Testis (tissue), 5 donors: ENCODE measurements at regions of chr12 and their contacts with region 1.

Region 1: DNA sequence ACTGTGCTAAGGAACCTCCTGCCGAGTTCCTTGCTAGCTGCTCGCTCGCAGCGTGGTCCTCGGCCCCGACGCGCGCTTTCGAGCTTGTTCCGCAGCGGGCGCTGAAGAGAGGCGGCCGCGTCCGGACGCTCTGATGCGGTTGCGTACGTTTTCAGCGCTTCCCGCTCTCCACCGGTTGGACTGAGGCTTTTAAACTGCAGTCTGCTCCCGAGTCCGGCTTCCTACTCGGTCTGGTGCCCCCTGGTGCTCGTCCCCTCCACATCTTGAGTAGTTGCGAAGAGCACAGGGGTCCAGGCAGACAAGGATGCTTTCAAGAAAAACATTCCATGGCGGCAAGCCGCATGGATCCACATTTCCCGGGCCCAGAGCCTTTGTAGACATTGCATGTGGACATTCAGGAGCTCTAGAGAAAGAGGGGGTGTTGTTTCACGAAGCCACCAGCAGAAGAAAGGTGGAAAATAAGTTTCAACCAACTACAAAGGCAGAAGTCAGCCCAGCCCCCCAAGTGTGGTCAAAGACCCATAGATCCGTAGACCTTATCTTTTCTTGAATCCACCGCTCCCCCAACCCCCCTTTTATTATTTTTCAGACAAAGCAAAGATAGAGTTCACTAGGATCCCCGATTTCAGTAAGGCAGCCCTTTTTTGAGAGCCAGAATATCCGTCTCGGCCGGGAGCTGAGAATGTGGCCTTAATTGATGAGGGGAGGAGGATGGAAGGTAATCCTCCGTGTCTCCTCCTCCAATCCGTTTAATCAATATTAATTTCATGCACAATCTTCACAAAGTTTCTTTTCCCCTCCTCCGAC is 984 bp upstream of the WNK1 start:
- DNase-seq: peak; percentile 96
- H3K4me3 ChIP-seq: peak overlapping the region; percentile 16 to 96
- H3K27ac ChIP-seq: peak overlapping the region; percentile 72 to 99
- H3K4me1 ChIP-seq: peaks cover 5% of the 10 kb centered on the region
- H3K27me3 ChIP-seq: no peaks in the 10 kb centered on the region
- CTCF ChIP-seq: peak; percentile 68 to 81 (median 81)
- POLR2A ChIP-seq: no peak

Region 2: DNA sequence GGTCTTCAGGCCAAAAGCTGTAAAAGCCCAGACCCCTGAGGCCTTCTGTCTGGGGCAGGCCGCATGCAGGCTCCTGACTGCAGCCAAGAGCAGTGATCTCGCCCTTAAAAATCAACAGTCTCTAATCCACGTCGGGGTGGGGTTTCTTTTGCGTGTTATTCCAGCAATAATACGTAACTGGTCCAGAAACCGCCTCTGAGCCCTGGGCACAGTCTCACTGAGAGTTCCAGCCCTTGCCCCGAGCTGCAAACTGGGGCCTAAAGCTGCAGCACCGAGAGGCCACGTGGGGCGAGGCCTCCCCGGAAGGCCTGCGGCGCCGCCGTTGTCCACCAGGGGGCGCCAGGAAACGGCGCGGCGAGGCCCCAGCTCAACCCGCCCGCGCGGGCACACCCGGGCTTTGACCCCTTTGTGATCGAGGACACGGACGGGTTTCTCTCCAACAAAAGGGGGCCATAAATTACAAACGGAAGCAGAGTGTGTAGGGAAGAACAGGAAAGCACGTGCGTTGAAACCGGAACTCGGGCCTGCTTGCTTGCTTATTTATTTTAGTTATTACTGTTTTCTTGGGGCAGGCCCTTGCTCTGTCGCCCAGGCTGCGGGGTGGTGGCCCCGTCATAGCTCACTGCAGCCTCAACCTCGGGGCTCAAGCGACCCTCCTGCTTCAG is 175.3 kb before region 1 on chr12:
- intact Hi-C with region 1: loop called (anchors 5 kb)
- DNase-seq: peak; percentile 83
- H3K4me3 ChIP-seq: peak overlapping the region; percentile 18 to 41
- H3K27ac ChIP-seq: peak overlapping the region in 1 of 2 donors; percentile 61
- H3K4me1 ChIP-seq: peaks cover 31% of the 10 kb centered on the region
- H3K27me3 ChIP-seq: no peaks in the 10 kb centered on the region
- CTCF ChIP-seq: peak; percentile 99 to 100 (median 100)
- POLR2A ChIP-seq: no peak

Region 3: GRCh38 chr12:642633-643474 is 108.5 kb before region 1 on chr12:
- intact Hi-C with region 1: loop called (anchors 10 kb)
- DNase-seq: peak; percentile 80
- H3K4me3 ChIP-seq: peak overlapping the region; percentile 58 to 70
- H3K27ac ChIP-seq: peak overlapping the region; percentile 94 to 97
- H3K4me1 ChIP-seq: peaks cover 30% of the 10 kb centered on the region
- H3K27me3 ChIP-seq: no peaks in the 10 kb centered on the region
- CTCF ChIP-seq: peak in 2 of 3 experiments; percentile 30 to 37
- POLR2A ChIP-seq: no peak

Region 4: GRCh38 chr12:659090-659705 is 92.2 kb before region 1 on chr12:
- intact Hi-C with region 1: no loop called
- DNase-seq: no peak
- H3K4me3 ChIP-seq: no peak overlapping the region
- H3K27ac ChIP-seq: no peak overlapping the region
- H3K4me1 ChIP-seq: peaks cover 16% of the 10 kb centered on the region
- H3K27me3 ChIP-seq: no peaks in the 10 kb centered on the region
- CTCF ChIP-seq: no peak
- POLR2A ChIP-seq: no peak

Region 5: DNA sequence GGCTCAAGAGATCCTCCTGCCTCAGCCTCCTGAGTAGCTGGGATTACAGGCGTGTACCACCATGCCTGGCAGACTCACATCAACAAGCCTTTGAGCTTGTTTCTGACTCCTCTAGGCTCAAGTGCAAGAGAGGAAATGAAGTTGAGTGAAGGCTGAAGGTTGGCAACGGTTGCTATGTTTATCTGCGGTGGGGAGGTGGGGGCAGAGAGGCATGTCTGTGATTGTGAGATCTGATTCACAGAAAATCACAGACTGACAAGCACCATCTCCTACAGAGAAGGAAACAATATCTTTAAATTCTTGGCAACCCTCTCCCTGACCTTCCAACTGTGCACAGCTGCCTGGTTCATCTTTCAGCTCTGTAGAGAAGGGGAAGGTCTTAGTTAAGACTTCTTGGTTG is 66.0 kb before region 1 on chr12:
- intact Hi-C with region 1: no loop called
- DNase-seq: peak; percentile 45
- H3K4me3 ChIP-seq: no peak overlapping the region
- H3K27ac ChIP-seq: no peak overlapping the region
- H3K4me1 ChIP-seq: no peaks in the 10 kb centered on the region
- H3K27me3 ChIP-seq: no peaks in the 10 kb centered on the region
- CTCF ChIP-seq: no peak
- POLR2A ChIP-seq: no peak